ENCODE measurements at regions of chr7 and their contacts with region 1.

Region 1: GRCh38 chr7:131556052-131556908 is at the start of gene PODXL:
- DNase-seq: peak in 1 of 2 experiments; percentile 83
- H3K4me3 ChIP-seq: peak within 1 kb of the TSS; percentile 84 to 96 (median 92)
- H3K27ac ChIP-seq: peak within 1 kb of the TSS; percentile 51; the same call in 1 of the 2 replicates
- H3K4me1 ChIP-seq: peaks cover 4 to 26% (median 17%) of the 10 kb centered on the region in 4 experiments
- H3K27me3 ChIP-seq: no peaks in the 10 kb centered on the region
- CTCF ChIP-seq: no peak
- EP300 ChIP-seq: no peak
- POLR2A ChIP-seq: no peak
- RAD21 ChIP-seq: peak in 1 of 2 experiments; percentile 15; a peak in 1 of 4 replicates
- total RNA-seq, gene PODXL: 925 and 945 TPM in 2 replicates

Region 2: GRCh38 chr7:131538071-131538790 is 18.0 kb before region 1 on chr7:
- CTCF ChIA-PET with region 1: interaction called, 154 read pairs
- POLR2A ChIA-PET with region 1: interaction called, 17 read pairs
- DNase-seq: no peak
- H3K4me3 ChIP-seq: no peak overlapping the region
- H3K27ac ChIP-seq: peak overlapping the region; percentile 47; the same call in 1 of the 2 replicates
- H3K4me1 ChIP-seq: peaks cover 20 to 67% (median 39%) of the 10 kb centered on the region in 4 experiments
- H3K27me3 ChIP-seq: no peaks in the 10 kb centered on the region
- CTCF ChIP-seq: no peak
- EP300 ChIP-seq: no peak
- POLR2A ChIP-seq: peak in 1 of 2 experiments; percentile 28; a peak in 1 of 3 replicates
- RAD21 ChIP-seq: no peak

Region 3: DNA sequence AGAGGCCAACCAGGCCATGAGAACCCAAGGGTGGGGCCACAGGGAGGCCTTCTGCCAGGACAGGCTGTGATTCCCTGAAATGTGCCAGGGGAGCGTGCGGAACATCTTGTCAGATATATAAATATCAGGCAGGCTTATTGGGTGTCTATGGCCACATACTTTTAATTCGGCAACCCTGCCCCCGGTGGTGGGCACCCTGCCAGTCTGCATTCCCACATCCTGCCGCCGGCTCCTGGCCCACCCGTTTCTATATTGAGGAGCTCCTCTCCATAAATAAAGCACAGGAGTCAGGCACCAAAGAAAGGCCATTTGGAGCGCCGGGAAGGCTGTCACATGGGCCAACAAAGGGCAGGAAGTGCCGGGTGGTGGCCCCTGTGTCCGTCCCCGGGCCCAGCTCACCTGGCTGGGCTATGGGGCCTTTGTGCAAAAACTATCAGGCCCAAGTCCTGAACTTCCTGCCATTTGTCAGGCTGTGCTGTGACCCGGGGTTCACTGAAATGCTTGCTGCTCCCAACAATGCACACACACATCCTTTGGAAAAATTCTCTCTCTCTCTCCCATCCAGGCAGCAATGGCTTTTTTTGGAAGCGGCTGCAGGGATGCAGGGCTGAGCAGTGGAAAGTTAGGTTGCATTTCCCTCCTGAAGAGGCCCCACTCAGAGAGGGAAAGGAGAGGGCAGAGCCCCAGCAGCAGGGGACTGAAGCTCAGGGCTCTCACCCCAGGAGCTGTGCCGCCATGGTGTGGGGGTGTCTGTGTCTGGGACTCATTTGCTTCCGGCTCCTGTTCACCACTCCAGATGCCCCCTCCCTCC is 25.2 kb after region 1 on chr7:
- CTCF ChIA-PET with region 1: interaction called, 7 read pairs
- POLR2A ChIA-PET with region 1: interaction called, 10 read pairs
- DNase-seq: peak in 1 of 2 experiments; percentile 60
- H3K4me3 ChIP-seq: no peak overlapping the region
- H3K27ac ChIP-seq: no peak overlapping the region; the same call in 1 of the 2 replicates
- H3K4me1 ChIP-seq: peaks cover 0 to 17% (median 9%) of the 10 kb centered on the region in 4 experiments; a peak in 5 of 7 replicates
- H3K27me3 ChIP-seq: no peaks in the 10 kb centered on the region; a peak in 1 of 7 replicates
- CTCF ChIP-seq: peak in 2 of 3 experiments; percentile 7 to 14; a peak in 2 of 4 replicates
- EP300 ChIP-seq: no peak
- POLR2A ChIP-seq: no peak
- RAD21 ChIP-seq: no peak

Region 4: DNA sequence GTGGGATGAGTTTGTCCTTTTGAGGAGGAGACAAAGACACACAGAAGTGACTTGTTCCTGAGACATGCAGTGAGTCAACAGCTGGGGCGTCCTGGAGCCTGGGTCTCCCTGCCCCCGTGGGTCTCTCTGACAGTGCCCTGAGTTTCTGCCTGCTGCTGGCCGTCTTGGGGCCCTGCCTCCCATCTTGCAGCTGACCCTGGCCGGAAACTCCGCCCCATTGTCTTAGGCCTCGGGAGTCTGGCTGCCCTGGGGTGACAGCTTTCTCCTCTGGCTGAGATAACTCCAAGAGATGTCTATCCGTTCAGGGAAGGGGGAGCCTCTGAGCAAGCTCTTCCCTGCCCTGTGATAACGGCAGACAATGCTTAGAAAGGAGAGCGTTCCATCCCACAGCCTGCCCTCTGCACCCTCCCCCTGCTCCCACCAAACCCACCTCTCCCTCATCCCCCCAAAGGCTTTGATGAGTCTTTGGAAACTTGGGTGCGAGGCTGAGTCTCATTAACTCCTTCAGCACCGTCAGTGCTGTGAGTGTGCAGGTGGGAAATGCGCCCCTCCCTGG is 69.6 kb after region 1 on chr7:
- CTCF ChIA-PET with region 1: interaction called, 12 read pairs
- POLR2A ChIA-PET with region 1: interaction called, 9 read pairs
- DNase-seq: peak; percentile 76 to 82
- H3K4me3 ChIP-seq: no peak overlapping the region; a peak in 1 of 8 replicates
- H3K27ac ChIP-seq: peak overlapping the region; percentile 53; the same call in 1 of the 2 replicates
- H3K4me1 ChIP-seq: peaks cover 7 to 22% (median 15%) of the 10 kb centered on the region in 4 experiments
- H3K27me3 ChIP-seq: no peaks in the 10 kb centered on the region
- CTCF ChIP-seq: peak in 2 of 3 experiments; percentile 12 to 34; a peak in 3 of 4 replicates
- EP300 ChIP-seq: no peak; a peak in 1 of 3 replicates
- POLR2A ChIP-seq: no peak
- RAD21 ChIP-seq: peak in 1 of 2 experiments; percentile 20; a peak in 2 of 4 replicates

Region 5: GRCh38 chr7:131674131-131674530 is 117.9 kb after region 1 on chr7:
- CTCF ChIA-PET with region 1: no interaction called
- POLR2A ChIA-PET with region 1: no interaction called
- DNase-seq: no peak
- H3K4me3 ChIP-seq: no peak overlapping the region
- H3K27ac ChIP-seq: no peak overlapping the region
- H3K4me1 ChIP-seq: no peaks in the 10 kb centered on the region
- H3K27me3 ChIP-seq: no peaks in the 10 kb centered on the region
- CTCF ChIP-seq: no peak
- EP300 ChIP-seq: no peak
- POLR2A ChIP-seq: no peak
- RAD21 ChIP-seq: no peak

Region 6: DNA sequence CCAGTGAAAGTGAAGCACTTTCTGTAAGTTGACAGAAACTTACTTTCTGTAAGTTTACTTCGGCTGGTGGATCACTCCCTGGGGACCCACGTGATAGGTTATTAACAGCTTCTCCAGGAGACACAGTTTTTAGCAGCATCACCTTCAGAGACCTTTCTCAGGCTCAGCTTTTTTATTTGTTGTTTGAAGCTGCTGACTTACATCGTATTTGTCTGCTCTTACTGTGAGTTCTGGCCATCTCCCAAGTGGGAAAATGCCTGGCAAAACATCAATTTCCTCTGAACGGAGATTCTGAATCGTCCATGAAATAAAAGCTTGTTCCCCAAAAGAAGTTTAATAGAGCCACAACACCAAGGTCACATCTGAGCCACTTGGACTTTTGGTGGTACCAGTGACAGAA is 178.8 kb after region 1 on chr7:
- CTCF ChIA-PET with region 1: no interaction called
- POLR2A ChIA-PET with region 1: no interaction called
- DNase-seq: no peak
- H3K4me3 ChIP-seq: no peak overlapping the region
- H3K27ac ChIP-seq: no peak overlapping the region
- H3K4me1 ChIP-seq: peaks cover 0 to 7% (median 0%) of the 10 kb centered on the region in 4 experiments; a peak in 2 of 7 replicates
- H3K27me3 ChIP-seq: no peaks in the 10 kb centered on the region
- CTCF ChIP-seq: no peak
- EP300 ChIP-seq: no peak
- POLR2A ChIP-seq: no peak
- RAD21 ChIP-seq: no peak